Ascending aorta (tissue), 2 donors: ENCODE measurements at regions of chr1 and their contacts with region 1.

Region 1: GRCh38 chr1:1273512-1274298 is at the start of gene UBE2J2:
- DNase-seq: peak; percentile 79 to 97
- H3K4me3 ChIP-seq: peak within 1 kb of the TSS; percentile 97 to 98
- H3K27ac ChIP-seq: peak within 1 kb of the TSS; percentile 67 to 76
- H3K4me1 ChIP-seq: peaks cover 29 to 39% of the 10 kb centered on the region in 2 donors
- H3K27me3 ChIP-seq: no peaks in the 10 kb centered on the region
- CTCF ChIP-seq: peak in 1 of 3 experiments; percentile 12
- total RNA-seq, gene UBE2J2: 25.2 TPM

Region 2: DNA sequence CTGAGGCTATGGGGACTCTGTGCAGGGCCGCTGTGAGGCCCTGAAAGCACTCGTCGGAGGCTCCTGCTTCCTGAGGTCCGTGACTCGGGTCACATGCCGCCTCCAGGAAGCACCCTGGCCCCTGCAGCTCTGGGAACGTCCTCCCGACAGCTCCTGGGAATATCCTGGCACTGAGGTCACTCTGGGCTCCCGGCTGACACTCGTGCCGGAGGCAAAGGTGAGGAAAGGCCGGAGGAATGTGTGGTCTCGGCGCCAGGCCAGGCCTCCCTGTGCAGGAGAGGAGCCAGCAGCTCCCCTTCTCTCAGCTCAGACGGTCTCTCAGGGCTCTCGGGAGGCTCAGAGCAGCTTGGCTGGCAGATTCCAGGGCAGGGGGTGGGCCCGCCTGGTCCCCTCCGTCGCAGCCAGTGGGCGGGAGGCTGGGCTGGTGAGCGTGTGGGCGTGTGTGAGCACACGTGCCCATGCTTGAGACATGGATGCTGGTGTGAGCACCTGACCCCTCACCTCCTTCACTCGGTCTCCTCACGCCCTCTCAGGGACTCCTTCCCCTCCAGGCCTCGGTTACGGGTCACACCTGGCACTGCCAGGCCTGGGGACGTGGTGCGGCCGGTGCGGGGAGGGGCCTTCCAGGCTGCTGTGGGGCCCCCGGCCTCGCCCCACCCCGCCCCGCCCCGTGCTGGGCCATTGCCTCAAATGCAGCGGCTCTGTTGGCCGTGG is 194.1 kb before region 1 on chr1:
- intact Hi-C with region 1: no loop called
- DNase-seq: peak; percentile 33 to 72
- H3K4me3 ChIP-seq: peak overlapping the region; percentile 19 to 53
- H3K27ac ChIP-seq: no peak overlapping the region
- H3K4me1 ChIP-seq: peaks cover 0 to 9% of the 10 kb centered on the region in 2 donors
- H3K27me3 ChIP-seq: no peaks in the 10 kb centered on the region
- CTCF ChIP-seq: no peak

Region 3: GRCh38 chr1:1231400-1232223 is 42.1 kb before region 1 on chr1 and contains the start of gene SDF4:
- intact Hi-C with region 1: loop called (anchors 2 kb)
- DNase-seq: peak; percentile 77 to 98
- H3K4me3 ChIP-seq: peak within 1 kb of the TSS; percentile 91 to 95
- H3K27ac ChIP-seq: peak within 1 kb of the TSS; percentile 89 to 94
- H3K4me1 ChIP-seq: peaks cover 23% of the 10 kb centered on the region in 2 donors
- H3K27me3 ChIP-seq: no peaks in the 10 kb centered on the region
- CTCF ChIP-seq: no peak
- total RNA-seq, gene SDF4: 223 TPM